ENCODE measurements at regions of chr4 and their contacts with region 1.

Region 1: DNA sequence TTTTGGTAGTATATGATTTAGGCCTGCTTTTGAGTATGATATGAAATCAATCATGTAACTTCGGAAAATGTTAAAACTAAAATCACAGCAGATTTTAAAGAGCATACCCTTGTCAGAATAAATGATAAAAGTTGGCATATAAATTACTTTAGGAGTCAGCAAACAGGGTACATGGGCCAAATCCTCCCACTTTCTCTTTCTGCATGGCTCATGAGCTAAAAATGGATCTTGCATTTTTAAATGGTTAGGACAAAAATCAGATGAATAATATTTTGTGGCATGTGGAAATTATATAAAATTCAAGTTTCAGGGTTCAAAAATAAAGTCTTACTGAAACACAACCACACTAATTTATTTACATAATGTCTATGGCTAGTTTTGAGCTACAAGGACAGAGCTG is 214.9 kb downstream of the GASK1B start:
- DNase-seq: no peak
- H3K4me3 ChIP-seq: no peak overlapping the region
- H3K27ac ChIP-seq: no peak overlapping the region
- H3K4me1 ChIP-seq: peaks cover 8% of the 10 kb centered on the region; the same call in 1 of the 2 replicates
- H3K27me3 ChIP-seq: no peaks in the 10 kb centered on the region
- CTCF ChIP-seq: no peak

Region 2: DNA sequence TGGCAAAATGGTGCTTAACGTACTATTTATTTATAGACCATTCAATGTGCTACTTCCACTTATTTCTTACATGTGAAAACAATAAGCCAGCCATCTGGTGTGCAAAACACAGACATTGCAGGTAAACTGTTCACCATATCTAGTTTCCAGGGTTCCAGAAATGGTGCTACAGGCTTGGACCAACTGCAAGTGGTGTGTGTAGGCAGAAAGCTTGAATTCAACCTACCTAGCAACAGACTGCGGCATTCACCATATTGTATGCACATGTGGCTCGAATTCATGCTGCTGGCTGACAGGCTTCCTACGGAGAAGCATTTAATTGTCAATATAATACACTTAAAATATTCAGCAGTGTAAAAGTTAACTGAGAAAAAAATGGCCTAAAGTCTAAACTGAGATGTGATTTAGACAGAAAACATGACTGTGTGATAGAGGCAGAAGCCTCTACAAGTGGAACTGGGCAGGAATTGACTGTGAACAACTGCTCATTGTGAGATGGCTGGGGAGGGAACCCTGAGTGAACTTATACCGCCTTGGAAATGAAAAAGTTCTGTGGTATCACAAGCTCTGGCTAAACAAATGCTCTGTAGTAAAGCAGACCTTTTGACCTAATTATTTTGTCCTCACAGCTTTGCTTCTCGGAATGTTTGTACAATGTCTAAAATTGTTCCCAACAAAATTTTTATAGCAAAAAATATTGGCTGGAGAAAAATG is 302.7 kb before region 1 on chr4:
- CTCF ChIA-PET with region 1: no interaction called
- POLR2A ChIA-PET with region 1: no interaction called
- intact Hi-C with region 1: no loop called
- DNase-seq: no peak
- H3K4me3 ChIP-seq: no peak overlapping the region
- H3K27ac ChIP-seq: no peak overlapping the region
- H3K4me1 ChIP-seq: no peaks in the 10 kb centered on the region
- H3K27me3 ChIP-seq: no peaks in the 10 kb centered on the region
- CTCF ChIP-seq: no peak

Region 3: DNA sequence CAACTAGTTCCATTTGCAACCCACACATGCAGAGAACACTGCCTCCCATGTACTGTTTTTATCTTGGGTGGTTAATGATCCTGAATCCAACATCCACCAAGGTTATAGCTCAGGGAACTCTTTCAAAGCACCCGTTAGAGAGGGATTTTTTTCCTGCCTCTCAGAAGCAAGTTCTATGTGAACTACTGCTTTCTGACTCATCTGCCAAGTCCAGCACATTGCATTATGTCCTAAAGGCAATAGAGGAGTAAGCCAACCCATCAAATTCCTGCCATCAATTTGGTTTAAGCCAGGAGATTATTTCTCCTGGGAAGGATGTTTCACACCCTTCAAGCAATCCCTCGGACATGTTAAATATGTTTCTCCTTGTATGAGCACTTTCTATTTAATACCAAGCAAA is 119.5 kb before region 1 on chr4:
- CTCF ChIA-PET with region 1: no interaction called
- POLR2A ChIA-PET with region 1: no interaction called
- intact Hi-C with region 1: no loop called
- DNase-seq: no peak
- H3K4me3 ChIP-seq: no peak overlapping the region
- H3K27ac ChIP-seq: no peak overlapping the region
- H3K4me1 ChIP-seq: no peaks in the 10 kb centered on the region
- H3K27me3 ChIP-seq: no peaks in the 10 kb centered on the region
- CTCF ChIP-seq: no peak

Region 4: GRCh38 chr4:157929486-157929885 is 28.4 kb before region 1 on chr4:
- CTCF ChIA-PET with region 1: interaction called, 18 read pairs
- POLR2A ChIA-PET with region 1: no interaction called
- intact Hi-C with region 1: no loop called
- DNase-seq: no peak
- H3K4me3 ChIP-seq: no peak overlapping the region
- H3K27ac ChIP-seq: no peak overlapping the region
- H3K4me1 ChIP-seq: no peaks in the 10 kb centered on the region
- H3K27me3 ChIP-seq: no peaks in the 10 kb centered on the region
- CTCF ChIP-seq: no peak

Region 5: DNA sequence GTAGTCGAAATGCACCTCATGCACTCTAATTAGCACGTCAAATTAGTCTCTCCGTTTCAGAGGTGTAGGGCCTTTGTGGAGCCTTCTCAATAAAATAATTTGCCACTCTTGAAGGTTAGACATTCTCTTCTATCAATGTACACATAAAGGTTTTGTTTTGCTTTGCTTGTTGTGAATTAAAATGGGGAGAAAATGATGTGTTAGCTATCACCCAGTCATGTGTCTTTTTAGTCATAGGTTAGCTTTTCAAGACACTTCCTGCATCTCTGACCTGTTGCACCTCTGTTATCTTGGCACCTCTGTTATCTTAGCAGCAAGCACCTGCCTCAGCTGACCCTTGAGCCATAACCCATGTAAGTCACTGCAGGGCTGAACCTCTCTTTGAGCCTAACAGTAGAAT is 253.3 kb after region 1 on chr4:
- CTCF ChIA-PET with region 1: no interaction called
- POLR2A ChIA-PET with region 1: no interaction called
- intact Hi-C with region 1: no loop called
- DNase-seq: no peak
- H3K4me3 ChIP-seq: peak overlapping the region; percentile 76
- H3K27ac ChIP-seq: peak overlapping the region; percentile 86
- H3K4me1 ChIP-seq: no peaks in the 10 kb centered on the region; the same call in 1 of the 2 replicates
- H3K27me3 ChIP-seq: no peaks in the 10 kb centered on the region
- CTCF ChIP-seq: no peak

Measured in PC-9 (cell line).